Right ventricle myocardium superior (tissue), 1 donor: ENCODE measurements at regions of chr1 and their contacts with region 1.

Region 1: DNA sequence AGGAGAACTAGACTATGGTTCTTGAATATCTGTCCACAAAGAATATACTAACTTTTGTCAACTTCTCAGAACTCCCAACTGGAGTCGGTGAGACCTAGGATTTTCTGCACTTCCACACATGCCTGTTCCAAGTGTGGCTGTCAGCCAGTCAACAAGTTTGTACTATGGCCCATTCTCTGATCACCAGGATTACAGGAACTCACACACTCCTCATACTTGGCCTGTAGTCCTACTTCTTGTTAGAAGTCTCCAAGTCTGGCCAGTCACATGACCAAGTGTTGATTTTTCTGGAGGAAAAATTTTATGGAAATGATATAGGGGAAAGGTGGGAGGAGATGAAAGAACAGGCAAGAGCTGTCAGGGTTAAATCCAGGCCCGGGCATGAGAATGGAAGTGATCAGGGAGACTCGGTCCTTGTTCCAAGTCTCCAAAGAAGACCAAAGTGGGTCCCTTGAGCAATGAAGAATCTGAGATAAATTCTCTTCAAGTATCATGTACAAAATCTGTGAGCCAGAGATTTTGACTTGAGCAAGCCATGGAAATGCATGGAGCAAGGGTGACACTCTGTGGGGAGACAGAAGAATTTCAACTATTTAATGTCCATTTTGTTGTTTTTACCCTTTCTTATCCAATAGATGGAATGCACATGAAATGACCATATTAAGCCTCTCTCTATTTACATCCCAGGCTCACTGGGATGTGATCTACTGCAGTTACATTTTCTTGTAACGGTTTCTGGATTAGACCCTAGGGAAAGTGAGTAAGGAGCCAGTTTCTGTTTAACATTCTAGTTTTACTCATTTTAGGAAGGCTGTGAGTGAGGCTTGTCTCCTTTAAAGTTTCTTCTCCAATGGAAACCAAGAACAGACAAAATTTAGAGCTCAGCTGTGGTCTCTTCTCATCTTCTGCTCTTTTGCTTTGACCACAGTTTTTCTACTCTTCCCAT is 320.9 kb downstream of the ASTN1 start:
- DNase-seq: no peak
- ATAC-seq: peak; percentile 66

Region 2: DNA sequence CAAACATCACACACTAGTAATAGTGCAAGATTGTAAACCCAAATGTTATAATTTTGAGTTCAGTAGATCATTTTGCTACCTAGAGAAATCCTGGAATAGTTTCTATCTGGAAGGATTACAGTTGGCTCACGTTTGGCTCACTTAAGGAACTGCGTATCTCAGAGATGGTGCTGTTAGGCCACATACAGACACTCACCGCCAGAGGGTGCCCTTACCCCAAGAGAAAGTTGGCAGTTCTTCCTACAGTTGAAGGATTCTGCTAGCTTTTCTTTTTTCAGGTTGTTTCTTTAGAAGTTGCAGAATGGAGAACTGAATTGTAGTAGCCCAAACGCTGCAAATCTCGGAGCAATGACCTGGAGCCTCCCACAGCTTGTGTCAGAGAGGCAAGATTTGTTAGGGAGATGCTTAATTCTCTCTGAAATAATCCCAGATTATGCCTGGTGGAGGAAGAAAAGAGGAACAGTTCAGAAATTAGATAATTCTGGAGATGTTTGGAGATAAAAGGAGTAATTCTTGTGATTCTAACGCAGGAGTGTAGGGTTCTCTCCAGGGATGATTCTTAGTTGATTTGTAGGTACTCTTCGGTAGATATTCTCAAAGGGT is 468.6 kb before region 1 on chr1:
- intact Hi-C with region 1: loop called (anchors 5 kb)
- DNase-seq: peak; percentile 77
- ATAC-seq: peak; percentile 82

Region 3: DNA sequence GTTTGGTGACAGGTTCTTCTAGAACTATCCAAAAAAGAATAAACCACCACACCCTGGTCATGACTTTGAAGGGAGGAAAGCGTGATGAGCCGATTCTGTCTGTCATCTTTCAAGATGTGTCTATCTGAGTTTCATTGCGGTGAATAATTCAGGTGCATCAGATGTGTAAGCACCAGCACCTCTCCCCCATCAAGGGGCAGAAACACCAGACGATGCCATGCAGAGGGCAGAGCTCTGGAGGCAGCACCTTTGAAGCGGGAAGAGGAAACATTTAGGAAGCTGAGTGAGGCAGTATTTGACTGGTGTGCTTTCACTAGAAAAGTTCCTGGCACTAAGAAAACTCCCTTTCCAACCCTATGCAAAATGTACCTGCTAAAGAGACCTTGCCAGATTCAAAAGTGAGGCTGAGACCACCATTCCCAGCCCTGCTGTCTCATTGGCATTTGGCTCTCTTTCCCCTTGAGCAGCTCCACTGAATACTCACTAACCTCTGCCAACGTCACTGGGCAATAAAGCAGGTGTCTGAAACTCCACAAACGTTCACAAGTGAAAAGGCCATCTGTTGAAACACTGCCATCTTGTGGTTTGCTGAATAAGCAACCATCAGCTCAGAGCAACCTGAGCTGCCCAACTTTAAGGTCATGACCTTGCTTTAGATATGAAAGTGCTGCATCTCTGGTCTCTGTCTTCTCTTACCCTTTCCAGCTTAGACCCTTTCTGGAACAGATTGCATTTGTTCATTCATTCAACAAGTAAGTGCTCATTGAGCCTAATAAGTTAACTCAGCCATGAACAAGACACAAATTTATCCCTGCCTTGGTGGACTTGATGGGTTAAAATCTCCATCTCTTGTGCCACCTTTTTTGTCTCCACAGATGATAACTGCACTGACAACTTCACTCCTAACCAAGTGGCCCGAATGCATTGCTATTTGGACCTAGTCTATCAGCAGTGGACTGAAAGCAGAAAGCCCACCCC is 152.1 kb before region 1 on chr1:
- intact Hi-C with region 1: loop called (anchors 5 kb)
- DNase-seq: no peak
- ATAC-seq: peak; percentile 69